ENCODE measurements at regions of chr2 and their contacts with region 1.

Region 1: GRCh38 chr2:85409845-85410583 is at the start of gene CAPG:
- DNase-seq: peak; percentile 76
- ATAC-seq: peak; percentile 75
- H3K4me3 Mint-ChIP-seq: peak within 1 kb of the TSS; percentile 89
- H3K27ac Mint-ChIP-seq: peak within 1 kb of the TSS; percentile 92
- H3K4me1 Mint-ChIP-seq: peaks cover 90% of the 10 kb centered on the region
- H3K27me3 Mint-ChIP-seq: no peaks in the 10 kb centered on the region
- CTCF ChIP-seq: no peak
- total RNA-seq, gene CAPG: 208 and 213 TPM in 2 replicates

Region 2: DNA sequence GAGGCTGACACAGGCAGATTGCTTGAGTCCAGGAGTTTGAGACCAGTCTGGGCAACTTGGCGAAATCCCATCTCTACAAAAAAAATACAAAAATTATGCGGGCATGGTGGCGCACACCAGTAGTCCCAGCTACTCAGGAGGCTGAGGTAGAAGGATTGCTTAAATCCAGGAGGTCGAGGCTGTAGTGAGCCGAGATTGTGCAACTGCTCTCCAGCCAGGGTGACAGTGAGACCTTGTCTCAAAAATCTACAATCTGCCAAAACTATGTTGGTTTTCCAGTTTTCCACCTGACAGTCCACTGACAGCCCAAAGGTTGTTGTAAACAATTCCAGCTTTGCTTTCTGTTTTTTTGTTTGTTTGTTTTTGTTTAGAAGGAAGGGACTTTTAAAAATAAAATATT is 387.8 kb before region 1 on chr2:
- CTCF ChIA-PET with region 1: no interaction called
- POLR2A ChIA-PET with region 1: no interaction called
- intact Hi-C with region 1: no loop called
- DNase-seq: no peak
- ATAC-seq: no peak
- H3K4me3 Mint-ChIP-seq: no peak overlapping the region
- H3K27ac Mint-ChIP-seq: no peak overlapping the region
- H3K4me1 Mint-ChIP-seq: peaks cover 31% of the 10 kb centered on the region
- H3K27me3 Mint-ChIP-seq: no peaks in the 10 kb centered on the region
- CTCF ChIP-seq: no peak

Region 3: GRCh38 chr2:85390941-85391669 is 18.9 kb before region 1 on chr2:
- CTCF ChIA-PET with region 1: interaction called, 9 read pairs
- POLR2A ChIA-PET with region 1: interaction called, 47 read pairs
- intact Hi-C with region 1: loop called (anchors 1 kb)
- DNase-seq: peak; percentile 69
- ATAC-seq: peak; percentile 22
- H3K4me3 Mint-ChIP-seq: no peak overlapping the region
- H3K27ac Mint-ChIP-seq: peak overlapping the region; percentile 81
- H3K4me1 Mint-ChIP-seq: peaks cover 30% of the 10 kb centered on the region
- H3K27me3 Mint-ChIP-seq: no peaks in the 10 kb centered on the region
- CTCF ChIP-seq: no peak

Region 4: DNA sequence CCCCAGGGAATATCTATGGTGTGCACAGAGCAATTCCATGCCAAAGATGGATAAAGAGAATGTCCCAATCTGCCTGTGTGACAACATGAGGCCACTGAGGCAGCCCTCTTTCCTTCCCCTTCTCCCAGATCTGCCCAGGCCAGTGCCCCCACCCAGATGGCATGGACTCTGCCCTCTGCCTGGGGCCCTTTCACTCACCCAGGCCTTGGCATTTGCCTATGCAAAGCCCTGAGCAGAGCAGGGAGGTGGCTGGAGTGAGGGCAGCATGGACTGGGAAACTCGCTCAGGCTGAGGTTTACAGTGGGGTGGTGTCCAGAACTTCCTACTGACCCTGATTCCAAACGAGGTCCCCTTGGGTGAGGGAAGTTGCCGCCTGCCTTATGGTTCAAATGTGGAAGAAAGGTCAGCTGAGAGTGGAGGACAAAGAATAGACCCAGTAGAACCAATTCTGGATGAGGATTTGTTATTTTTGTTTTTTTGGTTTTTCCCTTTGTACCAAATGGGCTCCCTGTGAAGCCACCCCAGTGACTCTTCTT is 17.4 kb after region 1 on chr2:
- CTCF ChIA-PET with region 1: no interaction called
- POLR2A ChIA-PET with region 1: no interaction called
- intact Hi-C with region 1: no loop called
- DNase-seq: no peak
- ATAC-seq: no peak
- H3K4me3 Mint-ChIP-seq: no peak overlapping the region
- H3K27ac Mint-ChIP-seq: no peak overlapping the region
- H3K4me1 Mint-ChIP-seq: no peaks in the 10 kb centered on the region
- H3K27me3 Mint-ChIP-seq: no peaks in the 10 kb centered on the region
- CTCF ChIP-seq: no peak

Region 5: GRCh38 chr2:85437488-85438284 is 27.7 kb after region 1 on chr2:
- CTCF ChIA-PET with region 1: no interaction called
- POLR2A ChIA-PET with region 1: interaction called, 13 read pairs
- intact Hi-C with region 1: no loop called
- DNase-seq: peak; percentile 80
- ATAC-seq: peak; percentile 86
- H3K4me3 Mint-ChIP-seq: peak overlapping the region; percentile 87
- H3K27ac Mint-ChIP-seq: peak overlapping the region; percentile 95
- H3K4me1 Mint-ChIP-seq: peaks cover 33% of the 10 kb centered on the region
- H3K27me3 Mint-ChIP-seq: no peaks in the 10 kb centered on the region
- CTCF ChIP-seq: no peak

Measured in activated B cell treated with CpG ODN at 0.5 μM for 24 hours (primary cell).